B cell (primary cell): ENCODE measurements at regions of chr11 and their contacts with region 1.

Region 1: GRCh38 chr11:65817835-65818742 is 15.7 kb upstream of the SNX32 start:
- DNase-seq: peak; percentile 95
- ATAC-seq: peak; percentile 98
- H3K4me3 ChIP-seq: peak overlapping the region; percentile 43 to 66 (median 52)
- H3K4me3 Mint-ChIP-seq: peak overlapping the region; percentile 74
- H3K27ac ChIP-seq: peak overlapping the region; percentile 54 to 66
- H3K27ac Mint-ChIP-seq: peak overlapping the region; percentile 75
- H3K4me1 ChIP-seq: peaks cover 6 to 13% of the 10 kb centered on the region in 2 donors
- H3K4me1 Mint-ChIP-seq: peaks cover 9% of the 10 kb centered on the region
- H3K27me3 ChIP-seq: no peaks in the 10 kb centered on the region
- H3K27me3 Mint-ChIP-seq: no peaks in the 10 kb centered on the region
- CTCF ChIP-seq: peak; percentile 100

Region 2: DNA sequence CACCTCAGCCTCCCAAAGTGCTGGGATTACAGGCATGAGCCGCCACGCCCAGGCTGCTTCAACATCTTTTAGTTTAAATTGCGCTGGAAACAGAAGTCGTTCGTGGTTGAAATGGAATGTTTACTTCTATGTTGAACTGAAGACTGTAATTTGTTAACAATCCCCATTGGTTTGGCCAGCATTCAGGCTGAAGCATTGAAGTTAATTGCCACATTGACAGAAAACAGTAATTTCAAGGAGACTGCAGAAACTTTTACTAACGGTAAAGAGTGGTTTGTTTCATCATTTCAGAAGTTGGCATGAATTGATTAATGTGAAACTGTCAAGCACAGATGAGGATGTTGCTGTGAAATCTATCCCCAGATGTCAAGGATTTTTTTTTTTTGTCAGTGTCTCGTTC is 51.6 kb before region 1 on chr11:
- CTCF ChIA-PET with region 1: interaction called, 22 read pairs
- POLR2A ChIA-PET with region 1: no interaction called
- intact Hi-C with region 1: loop called (anchors 5 kb)
- DNase-seq: no peak
- ATAC-seq: no peak
- H3K4me3 ChIP-seq: no peak overlapping the region
- H3K4me3 Mint-ChIP-seq: no peak overlapping the region
- H3K27ac ChIP-seq: no peak overlapping the region
- H3K27ac Mint-ChIP-seq: no peak overlapping the region
- H3K4me1 ChIP-seq: peaks cover 0 to 4% of the 10 kb centered on the region in 2 donors
- H3K4me1 Mint-ChIP-seq: peaks cover 3% of the 10 kb centered on the region
- H3K27me3 ChIP-seq: no peaks in the 10 kb centered on the region
- H3K27me3 Mint-ChIP-seq: peaks cover under 1% of the 10 kb centered on the region
- CTCF ChIP-seq: no peak

Region 3: GRCh38 chr11:65791691-65792213 is 26.3 kb before region 1 on chr11:
- CTCF ChIA-PET with region 1: interaction called, 48 read pairs
- POLR2A ChIA-PET with region 1: interaction called, 3 read pairs
- intact Hi-C with region 1: no loop called
- DNase-seq: no peak
- ATAC-seq: peak; percentile 94
- H3K4me3 ChIP-seq: no peak overlapping the region
- H3K4me3 Mint-ChIP-seq: peak overlapping the region; percentile 34
- H3K27ac ChIP-seq: peak overlapping the region in 1 of 2 donors; percentile 18
- H3K27ac Mint-ChIP-seq: peak overlapping the region; percentile 89
- H3K4me1 ChIP-seq: peaks cover 22 to 36% of the 10 kb centered on the region in 2 donors
- H3K4me1 Mint-ChIP-seq: peaks cover 42% of the 10 kb centered on the region
- H3K27me3 ChIP-seq: peaks cover 0 to 49% (median 22%) of the 10 kb centered on the region in 4 experiments
- H3K27me3 Mint-ChIP-seq: peaks cover 6% of the 10 kb centered on the region
- CTCF ChIP-seq: no peak

Region 4: DNA sequence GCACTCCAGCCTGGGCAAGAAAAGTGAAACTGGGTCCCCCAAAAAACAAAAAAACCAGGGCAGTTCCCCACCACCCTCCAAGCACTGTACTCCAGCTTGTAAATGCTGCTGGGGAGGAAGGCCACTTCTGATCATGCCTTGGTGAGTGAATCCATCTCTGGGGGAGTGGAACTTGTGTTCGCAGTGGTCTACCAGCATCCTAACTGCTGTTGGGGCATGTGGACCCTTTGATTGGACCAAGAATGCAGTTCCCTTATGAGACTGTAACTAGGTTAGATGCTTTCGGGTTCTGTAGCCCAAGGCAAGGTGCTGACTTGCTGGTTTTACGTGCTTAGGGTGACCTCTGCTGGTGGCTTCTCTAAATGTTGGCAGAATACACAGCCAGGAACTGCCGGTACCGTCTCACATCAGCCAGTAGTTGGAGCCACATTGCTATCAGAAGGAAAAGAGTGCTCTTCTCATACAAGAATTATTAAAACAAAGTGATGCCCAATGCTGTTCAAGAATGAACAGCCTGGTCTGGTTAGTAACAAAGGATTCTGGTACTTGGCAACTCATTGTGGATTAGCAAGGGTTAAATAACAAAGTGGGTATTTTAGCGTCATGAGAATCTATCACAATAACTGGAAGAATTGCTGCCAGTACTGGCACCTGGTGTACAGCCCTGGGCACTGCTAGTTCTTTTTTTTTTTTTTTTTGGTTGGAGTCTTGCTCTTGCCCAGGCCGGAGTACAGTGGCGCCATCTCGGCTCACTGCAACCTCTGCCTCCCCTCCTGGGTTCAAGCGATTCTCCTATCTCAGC is 170.9 kb after region 1 on chr11:
- CTCF ChIA-PET with region 1: interaction called, 6 read pairs
- POLR2A ChIA-PET with region 1: no interaction called
- intact Hi-C with region 1: loop called (anchors 2 kb)
- DNase-seq: peak; percentile 96
- ATAC-seq: peak; percentile 99
- H3K4me3 ChIP-seq: no peak overlapping the region
- H3K4me3 Mint-ChIP-seq: no peak overlapping the region
- H3K27ac ChIP-seq: no peak overlapping the region
- H3K27ac Mint-ChIP-seq: peak overlapping the region; percentile 84
- H3K4me1 ChIP-seq: peaks cover 3 to 7% of the 10 kb centered on the region in 2 donors
- H3K4me1 Mint-ChIP-seq: peaks cover 5% of the 10 kb centered on the region
- H3K27me3 ChIP-seq: no peaks in the 10 kb centered on the region
- H3K27me3 Mint-ChIP-seq: no peaks in the 10 kb centered on the region
- CTCF ChIP-seq: peak; percentile 99